Mammary epithelial cell (primary cell): ENCODE measurements at regions of chr19 and their contacts with region 1.

Region 1: GRCh38 chr19:33727331-33727998 is 69.2 kb upstream of the KCTD15 start:
- DNase-seq: no peak
- H3K4me3 ChIP-seq: no peak overlapping the region
- H3K27ac ChIP-seq: no peak overlapping the region
- H3K4me1 ChIP-seq: no peaks in the 10 kb centered on the region
- H3K27me3 ChIP-seq: peaks cover 2% of the 10 kb centered on the region
- CTCF ChIP-seq: no peak

Region 2: DNA sequence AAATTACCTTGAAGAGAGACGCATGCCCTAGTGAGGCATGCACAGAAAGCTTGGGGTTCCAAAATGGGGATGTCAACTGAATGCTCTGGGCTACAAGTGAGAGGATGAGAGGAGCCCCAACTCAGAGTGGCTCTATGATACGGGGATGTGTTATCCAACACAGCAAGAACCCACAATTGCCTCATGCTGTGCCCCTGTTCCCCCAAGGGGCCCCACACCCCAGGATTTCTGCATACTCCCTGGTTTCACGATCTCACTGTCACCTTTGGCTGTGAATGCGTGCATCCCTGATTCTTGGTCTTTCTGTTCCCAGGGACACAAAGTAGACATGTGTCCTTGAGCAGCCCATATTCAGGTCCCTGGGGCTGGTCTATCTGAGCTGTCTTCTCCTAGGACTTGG is 566.3 kb before region 1 on chr19:
- CTCF ChIA-PET with region 1: no interaction called
- dilution Hi-C with region 1: loop called (anchors 5 kb)
- in situ Hi-C with region 1: no loop called
- intact Hi-C with region 1: no loop called
- DNase-seq: no peak
- H3K4me3 ChIP-seq: no peak overlapping the region
- H3K27ac ChIP-seq: no peak overlapping the region
- H3K4me1 ChIP-seq: no peaks in the 10 kb centered on the region
- H3K27me3 ChIP-seq: no peaks in the 10 kb centered on the region
- CTCF ChIP-seq: no peak